OCI-LY7 (cell line): ENCODE measurements at regions of chr13 and their contacts with region 1.

Region 1: GRCh38 chr13:97109841-97110492 is 112.2 kb upstream of the MBNL2 start:
- DNase-seq: peak; percentile 45
- H3K4me3 ChIP-seq: no peak overlapping the region
- H3K27ac ChIP-seq: no peak overlapping the region
- H3K4me1 ChIP-seq: no peaks in the 10 kb centered on the region
- CTCF ChIP-seq: peak; percentile 77

Region 2: DNA sequence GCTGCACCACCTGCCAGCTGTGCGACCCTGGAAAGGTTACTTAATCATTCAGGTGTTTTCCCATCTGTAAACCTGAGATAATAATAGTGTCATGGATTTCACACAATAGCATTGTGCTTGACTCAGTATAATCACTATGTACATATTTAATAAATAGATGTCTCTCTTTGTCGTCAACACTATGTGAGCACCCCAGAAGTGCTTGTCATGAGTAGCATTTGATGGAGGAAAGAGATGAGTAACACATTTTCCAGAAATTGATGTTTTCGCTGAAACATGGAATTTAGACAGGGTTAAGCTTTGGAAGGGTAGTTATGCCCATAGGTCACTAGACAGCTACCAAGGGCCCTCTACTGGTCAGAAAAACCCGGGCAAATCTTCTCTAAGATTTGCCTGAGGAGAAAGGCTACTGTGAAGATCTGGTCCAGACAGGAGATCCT is 102.7 kb after region 1 on chr13:
- CTCF ChIA-PET with region 1: no interaction called
- POLR2A ChIA-PET with region 1: no interaction called
- intact Hi-C with region 1: loop called (anchors 5 kb)
- DNase-seq: peak; percentile 4
- H3K4me3 ChIP-seq: no peak overlapping the region
- H3K27ac ChIP-seq: no peak overlapping the region
- H3K4me1 ChIP-seq: no peaks in the 10 kb centered on the region
- CTCF ChIP-seq: peak; percentile 60

Region 3: GRCh38 chr13:97344265-97345175 is 234.6 kb after region 1 on chr13:
- CTCF ChIA-PET with region 1: no interaction called
- POLR2A ChIA-PET with region 1: interaction called, 3 read pairs
- intact Hi-C with region 1: loop called (anchors 1 kb)
- DNase-seq: peak; percentile 20
- H3K4me3 ChIP-seq: no peak overlapping the region
- H3K27ac ChIP-seq: no peak overlapping the region
- H3K4me1 ChIP-seq: no peaks in the 10 kb centered on the region
- CTCF ChIP-seq: peak; percentile 72

Region 4: DNA sequence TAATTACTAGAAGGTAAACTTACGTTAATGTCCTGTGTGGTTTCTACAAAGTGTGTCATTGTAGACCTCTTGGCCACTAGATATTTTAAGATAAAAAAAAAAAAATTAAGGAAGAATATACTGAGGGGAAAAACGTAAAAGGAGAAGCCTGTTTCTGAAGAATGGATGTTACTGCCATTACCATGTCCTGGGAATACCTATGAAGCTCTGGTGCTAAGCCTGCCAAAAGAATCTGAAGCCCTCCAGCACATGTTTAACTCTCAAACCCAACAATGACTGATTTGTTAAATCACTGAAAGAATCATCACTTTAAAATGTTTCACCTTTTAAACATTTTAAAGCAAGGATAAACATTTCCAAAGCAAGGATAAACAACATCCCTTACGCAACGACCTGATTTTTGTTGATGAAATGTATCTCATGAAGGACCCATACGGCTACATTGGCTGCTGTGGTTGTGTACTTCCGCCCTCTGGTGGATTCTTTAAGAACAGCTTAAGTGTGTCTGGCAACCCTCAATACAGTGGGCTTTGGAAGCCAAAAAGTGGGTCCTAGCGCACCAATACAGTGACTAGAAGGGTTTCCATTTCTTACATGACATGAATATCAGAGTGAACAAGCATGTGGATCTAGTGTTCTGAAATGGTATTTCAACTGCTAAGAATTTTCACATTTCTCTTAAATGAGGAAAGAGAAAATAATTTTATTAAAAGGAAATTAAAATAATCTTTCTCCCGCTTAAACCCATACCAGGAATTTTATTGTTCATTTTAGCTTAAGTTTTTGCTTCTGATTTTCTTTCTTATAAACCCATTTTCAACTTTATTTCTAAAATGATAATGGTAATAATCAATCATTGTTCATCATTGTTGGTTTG is 249.5 kb after region 1 on chr13:
- CTCF ChIA-PET with region 1: no interaction called
- POLR2A ChIA-PET with region 1: no interaction called
- intact Hi-C with region 1: loop called (anchors 1 kb)
- DNase-seq: peak; percentile 51
- H3K4me3 ChIP-seq: no peak overlapping the region
- H3K27ac ChIP-seq: no peak overlapping the region
- H3K4me1 ChIP-seq: no peaks in the 10 kb centered on the region
- CTCF ChIP-seq: peak; percentile 78

Region 5: GRCh38 chr13:97809576-97809975 is 699.6 kb after region 1 on chr13:
- CTCF ChIA-PET with region 1: no interaction called
- POLR2A ChIA-PET with region 1: no interaction called
- intact Hi-C with region 1: loop called (anchors 10 kb)
- DNase-seq: no peak
- H3K4me3 ChIP-seq: no peak overlapping the region
- H3K27ac ChIP-seq: no peak overlapping the region
- H3K4me1 ChIP-seq: no peaks in the 10 kb centered on the region
- CTCF ChIP-seq: no peak